ENCODE measurements at regions of chr4 and their contacts with region 1.

Region 1: DNA sequence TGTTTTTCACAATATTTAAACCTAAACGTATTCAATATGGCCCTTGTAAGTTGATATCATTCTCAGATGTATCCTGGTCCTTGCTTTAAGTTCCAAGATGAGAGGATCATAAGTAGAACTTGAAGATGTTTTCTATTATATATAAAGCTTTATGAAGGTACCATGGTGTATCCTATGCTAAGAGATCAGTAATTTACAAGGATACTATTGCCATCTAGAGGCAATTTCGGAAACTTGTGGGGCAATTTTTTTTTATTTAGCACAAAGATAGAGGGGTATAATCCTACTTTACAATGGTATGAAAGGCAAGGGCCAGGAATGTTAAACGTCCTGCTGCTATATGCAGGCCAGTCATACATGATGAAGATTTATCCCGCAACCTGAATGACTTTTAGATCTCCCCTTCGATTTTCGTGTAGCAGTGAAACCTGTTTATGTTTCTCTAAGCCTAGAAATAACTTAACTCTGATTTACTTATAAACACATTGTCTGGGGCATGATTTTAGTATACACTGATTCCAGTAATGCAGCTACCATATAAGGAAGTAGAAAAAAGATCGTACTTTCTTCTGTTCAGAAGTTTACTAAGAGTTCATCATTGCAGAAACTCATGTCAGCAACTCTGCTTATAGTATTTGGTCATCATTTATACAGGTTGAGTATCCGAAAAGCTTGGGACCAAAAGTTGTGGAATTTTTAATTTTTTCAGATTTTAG is 2.6 kb downstream of the SLC25A31 start:
- DNase-seq: no peak
- H3K4me3 ChIP-seq: no peak overlapping the region
- H3K27ac ChIP-seq: no peak overlapping the region
- H3K27me3 ChIP-seq: no peaks in the 10 kb centered on the region
- CTCF ChIP-seq: peak in 55 of 56 donors; percentile 51 to 84 (median 66)

Region 2: GRCh38 chr4:127604949-127605709 is 127.6 kb before region 1 on chr4:
- intact Hi-C with region 1: loop called (anchors 2 to 5 kb)
- DNase-seq: no peak
- H3K4me3 ChIP-seq: no peak overlapping the region
- H3K27ac ChIP-seq: no peak overlapping the region
- H3K27me3 ChIP-seq: peaks cover 0 to 9% (median 0%) of the 10 kb centered on the region in 45 donors
- CTCF ChIP-seq: peak; percentile 44 to 90 (median 70)

Region 3: DNA sequence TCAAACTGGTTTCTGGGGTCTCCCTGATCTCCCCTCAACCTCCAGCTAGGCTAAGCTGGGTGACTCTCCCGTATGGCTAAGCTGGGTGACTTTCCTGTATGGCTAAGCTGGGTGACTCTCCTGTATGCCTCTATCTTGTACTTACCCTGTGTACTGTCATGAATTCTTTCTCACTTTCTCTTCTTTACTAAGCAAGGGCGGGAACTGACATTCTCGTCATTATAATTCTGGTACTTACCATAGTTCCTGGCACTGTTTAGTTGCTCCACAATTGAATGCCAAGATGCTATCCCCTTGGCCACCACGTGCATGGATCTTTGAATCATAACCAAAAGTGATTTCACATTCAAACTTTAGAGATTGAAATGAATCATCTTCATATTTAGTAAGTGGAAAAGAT is 91.2 kb before region 1 on chr4:
- intact Hi-C with region 1: no loop called
- DNase-seq: no peak
- H3K4me3 ChIP-seq: no peak overlapping the region
- H3K27ac ChIP-seq: peak overlapping the region in 2 of 59 donors; percentile 21 to 32
- H3K27me3 ChIP-seq: no peaks in the 10 kb centered on the region
- CTCF ChIP-seq: no peak

Region 4: DNA sequence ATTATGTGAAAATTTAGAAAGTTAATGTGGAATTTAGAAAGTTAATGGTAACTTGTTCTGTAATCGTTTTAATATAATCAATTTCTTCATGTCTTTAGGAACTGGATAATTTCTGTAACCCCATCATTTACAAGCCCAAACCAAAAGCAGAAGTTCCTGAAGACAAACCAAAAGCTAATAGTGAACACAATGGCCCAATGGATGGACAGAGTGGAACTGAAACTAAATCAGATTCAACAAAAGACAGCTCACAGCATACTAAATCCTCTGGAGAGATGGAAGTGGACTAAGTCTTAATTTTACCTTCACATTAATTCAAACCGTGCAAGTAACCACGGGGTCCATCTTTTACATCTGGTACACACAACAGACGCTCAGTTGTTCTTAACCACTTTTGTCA is 99.8 kb after region 1 on chr4:
- intact Hi-C with region 1: no loop called
- DNase-seq: no peak
- H3K4me3 ChIP-seq: no peak overlapping the region
- H3K27ac ChIP-seq: no peak overlapping the region
- H3K27me3 ChIP-seq: no peaks in the 10 kb centered on the region
- CTCF ChIP-seq: no peak

Measured in dorsolateral prefrontal cortex (tissue), 120 donors.